ENCODE measurements at regions of chr9 and their contacts with region 1.

Region 1: GRCh38 chr9:128818099-128818838 is at the start of gene ENDOG:
- DNase-seq: peak; percentile 100
- H3K27ac ChIP-seq: peak within 1 kb of the TSS; percentile 87
- CTCF ChIP-seq: peak; percentile 100

Region 2: DNA sequence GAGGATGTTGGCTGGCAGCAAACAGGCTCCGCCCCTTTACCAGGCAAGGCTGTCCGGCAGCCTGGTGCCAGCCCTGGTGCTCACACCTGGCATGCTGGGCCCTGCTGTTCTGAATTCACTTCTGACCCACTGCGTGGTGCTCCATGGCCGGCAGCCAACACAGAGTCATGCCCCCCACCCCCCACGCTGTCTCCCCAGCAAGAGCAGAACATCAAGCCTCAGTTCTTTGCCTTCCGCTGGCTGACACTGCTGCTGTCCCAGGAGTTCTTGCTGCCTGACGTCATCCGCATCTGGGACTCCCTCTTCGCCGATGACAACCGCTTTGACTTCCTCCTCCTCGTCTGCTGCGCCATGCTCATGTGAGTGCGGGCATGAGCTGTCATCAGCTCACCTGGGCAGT is 12.6 kb before region 1 on chr9:
- CTCF ChIA-PET with region 1: interaction called, 6 read pairs
- POLR2A ChIA-PET with region 1: interaction called, 11 read pairs
- DNase-seq: no peak
- H3K27ac ChIP-seq: no peak overlapping the region
- CTCF ChIP-seq: no peak

Region 3: DNA sequence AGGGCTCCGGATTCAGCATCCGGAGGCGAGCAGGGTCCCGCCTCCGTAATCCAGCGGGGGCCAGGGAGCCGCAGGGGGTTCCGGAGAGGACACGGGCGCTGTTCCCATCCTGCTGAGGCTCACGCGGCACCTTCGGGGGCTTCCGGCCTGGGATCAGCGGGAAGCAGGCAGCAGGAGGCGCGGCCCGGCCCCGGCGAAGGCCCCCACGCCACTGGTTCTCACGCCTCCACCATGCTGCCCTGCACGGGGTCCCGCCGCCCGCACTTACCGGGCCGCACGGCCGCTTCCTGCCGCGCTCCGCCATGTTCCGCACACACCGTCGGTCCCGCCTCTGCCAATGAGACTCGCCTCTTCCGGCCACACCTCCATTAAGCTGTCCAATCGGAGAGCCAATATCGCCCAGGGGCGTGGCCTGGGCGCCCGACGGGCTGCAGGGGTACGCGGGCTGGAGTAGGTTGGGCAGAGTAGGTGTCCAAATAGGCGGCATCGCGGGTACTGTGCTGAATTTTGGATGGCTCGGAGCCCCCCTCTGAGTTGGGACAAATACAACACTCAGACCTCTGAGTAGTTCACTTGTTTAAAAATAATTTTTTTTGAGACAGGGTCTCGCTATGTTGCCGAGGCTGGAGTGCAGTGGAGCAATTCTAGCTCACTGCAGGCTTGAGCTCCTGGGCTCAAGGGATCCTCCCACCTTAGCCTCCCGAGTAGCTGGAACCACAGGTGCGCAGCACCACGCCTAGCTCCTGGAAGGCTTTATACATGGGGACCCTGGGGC is 11.4 kb after region 1 on chr9 and contains the start of gene SPOUT1:
- CTCF ChIA-PET with region 1: interaction called, 12 read pairs
- POLR2A ChIA-PET with region 1: interaction called, 7 read pairs
- DNase-seq: peak; percentile 100
- H3K27ac ChIP-seq: peak within 1 kb of the TSS; percentile 79
- CTCF ChIP-seq: no peak